ENCODE measurements at regions of chr1 and their contacts with region 1.

Region 1: DNA sequence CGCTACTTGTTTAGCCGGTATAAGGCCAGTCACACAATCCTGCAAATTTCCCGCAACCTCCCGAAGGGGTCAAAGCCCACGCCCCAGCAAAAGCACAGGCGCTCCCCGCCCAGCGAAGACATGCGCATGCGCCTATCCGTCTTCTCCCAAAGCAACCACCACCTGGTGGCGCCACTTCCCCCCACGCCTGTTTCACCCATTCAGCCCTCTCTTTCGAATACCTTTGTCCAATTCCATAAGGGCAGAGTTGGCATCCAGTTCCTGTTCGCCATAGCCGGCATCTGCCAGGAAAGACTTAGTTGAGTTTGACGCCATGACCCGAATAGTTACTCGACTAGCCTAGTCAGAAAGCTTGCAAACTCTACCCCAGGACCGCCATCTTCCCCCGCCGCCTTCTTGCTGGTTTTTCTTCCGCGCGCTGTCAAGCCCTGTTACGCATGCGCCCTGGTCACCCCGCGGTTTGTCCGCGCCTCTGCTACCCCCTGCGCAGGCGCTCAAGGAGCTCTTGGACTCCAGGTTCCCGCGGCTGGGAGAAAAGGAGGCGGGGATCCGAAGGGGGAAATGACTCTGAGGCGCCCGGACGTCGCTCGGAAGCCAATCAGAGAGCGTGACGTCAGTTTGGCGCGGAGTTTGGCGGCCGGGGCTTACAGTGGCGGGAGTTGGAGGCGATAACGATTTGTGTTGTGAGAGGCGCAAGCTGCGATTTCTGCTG is at the starts of genes DTL and INTS7:
- DNase-seq: peak; percentile 99
- H3K4me3 ChIP-seq: peak within 1 kb of the TSS; percentile 89 to 98 (median 95)
- H3K27ac ChIP-seq: peak within 1 kb of the TSS; percentile 86
- H3K4me1 ChIP-seq: peaks cover 30% of the 10 kb centered on the region
- H3K27me3 ChIP-seq: no peaks in the 10 kb centered on the region
- CTCF ChIP-seq: peak; percentile 77 to 84
- total RNA-seq, gene DTL: 3.2 to 24.6 TPM
- total RNA-seq, gene INTS7: 16.8 to 24.3 TPM

Region 2: DNA sequence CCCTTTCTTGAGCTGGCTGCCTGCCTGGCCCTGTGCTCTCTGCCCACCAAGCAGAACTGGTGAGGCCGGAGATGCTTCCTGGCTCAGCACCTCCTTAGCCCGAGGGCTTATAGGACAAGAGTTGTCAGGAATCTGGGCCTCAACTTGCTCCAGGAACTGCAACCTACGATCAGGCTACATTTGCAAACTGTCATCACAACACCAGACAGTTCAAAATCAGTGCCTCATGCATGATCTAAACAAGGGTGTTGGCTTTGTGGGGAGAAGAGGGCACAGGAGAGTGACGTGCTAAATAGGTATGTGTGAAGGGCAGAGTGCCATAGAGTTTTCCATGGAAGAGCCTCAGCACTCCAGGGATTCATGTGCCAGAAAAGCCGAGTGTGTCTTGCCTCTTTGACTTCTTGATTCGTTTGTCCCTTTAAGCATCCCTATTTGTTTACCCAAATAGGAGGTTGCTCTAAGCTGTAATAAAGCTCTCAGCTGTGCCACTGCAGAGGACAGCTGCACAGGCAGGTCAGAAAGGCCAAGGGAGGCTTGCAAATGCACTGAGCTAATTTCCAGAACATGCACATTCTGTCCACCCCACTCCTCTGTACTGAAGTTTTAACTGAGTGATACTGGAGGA is 329.7 kb before region 1 on chr1:
- CTCF ChIA-PET with region 1: interaction called, 14 read pairs
- dilution Hi-C with region 1: no loop called
- in situ Hi-C with region 1: no loop called
- intact Hi-C with region 1: no loop called
- DNase-seq: peak; percentile 78
- H3K4me3 ChIP-seq: no peak overlapping the region
- H3K27ac ChIP-seq: peak overlapping the region; percentile 29
- H3K4me1 ChIP-seq: peaks cover 22% of the 10 kb centered on the region
- H3K27me3 ChIP-seq: no peaks in the 10 kb centered on the region
- CTCF ChIP-seq: no peak

Region 3: DNA sequence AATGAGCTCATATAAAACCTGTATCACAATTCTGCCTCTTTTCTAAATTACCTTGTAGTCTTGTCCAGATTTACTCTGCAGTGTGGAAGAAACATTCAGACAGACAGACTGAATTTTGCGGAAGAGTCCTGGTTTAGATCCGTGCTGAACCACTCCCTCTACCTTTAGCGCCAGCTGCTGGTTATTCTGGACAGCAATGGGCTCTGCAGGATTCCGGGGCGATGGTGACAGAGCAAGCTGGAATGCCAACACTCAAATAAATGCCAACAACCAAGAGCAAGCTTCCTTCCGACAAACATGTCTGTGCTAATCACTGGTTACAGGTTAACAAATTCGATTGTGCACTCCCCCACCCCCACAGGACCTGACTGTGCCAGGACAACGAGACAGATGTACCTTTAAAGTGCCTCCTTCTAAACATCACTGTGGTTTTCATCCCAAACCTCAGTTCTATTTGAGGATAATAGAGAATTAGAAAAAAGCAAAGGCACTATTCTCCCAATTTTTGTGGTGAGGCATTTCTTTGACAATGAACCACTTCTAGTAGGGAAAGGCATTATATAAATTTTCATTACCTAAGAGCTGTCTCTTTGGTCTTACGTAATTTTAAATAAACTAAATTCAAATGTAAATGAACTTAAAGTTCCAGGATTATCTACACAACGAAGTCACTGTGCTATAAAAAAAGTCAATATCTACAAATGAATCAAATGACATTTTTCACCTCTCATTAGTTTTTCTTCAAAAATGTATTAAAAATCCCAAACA is 90.4 kb before region 1 on chr1:
- CTCF ChIA-PET with region 1: interaction called, 15 read pairs
- dilution Hi-C with region 1: no loop called
- in situ Hi-C with region 1: no loop called
- intact Hi-C with region 1: loop called (anchors 5 kb)
- DNase-seq: peak; percentile 93
- H3K4me3 ChIP-seq: no peak overlapping the region
- H3K27ac ChIP-seq: peak overlapping the region; percentile 5
- H3K4me1 ChIP-seq: peaks cover 14% of the 10 kb centered on the region
- H3K27me3 ChIP-seq: no peaks in the 10 kb centered on the region
- CTCF ChIP-seq: peak; percentile 97 to 98

Region 4: GRCh38 chr1:212012034-212012740 is 23.1 kb before region 1 on chr1:
- CTCF ChIA-PET with region 1: interaction called, 4 read pairs
- dilution Hi-C with region 1: no loop called
- in situ Hi-C with region 1: no loop called
- intact Hi-C with region 1: loop called (anchors 1 kb)
- DNase-seq: peak; percentile 61
- H3K4me3 ChIP-seq: no peak overlapping the region
- H3K27ac ChIP-seq: no peak overlapping the region
- H3K4me1 ChIP-seq: no peaks in the 10 kb centered on the region
- H3K27me3 ChIP-seq: no peaks in the 10 kb centered on the region
- CTCF ChIP-seq: peak; percentile 98 to 99